Calu3 (cell line): ENCODE measurements at regions of chr6 and their contacts with region 1.

Region 1: GRCh38 chr6:56837311-56837894 is 117.5 kb upstream of the BEND6 start:
- DNase-seq: peak; percentile 43
- H3K4me3 Mint-ChIP-seq: peak overlapping the region; percentile 45
- H3K27ac Mint-ChIP-seq: peak overlapping the region; percentile 57
- H3K4me1 Mint-ChIP-seq: peaks cover 35% of the 10 kb centered on the region
- H3K27me3 Mint-ChIP-seq: no peaks in the 10 kb centered on the region
- CTCF ChIP-seq: no peak

Region 2: DNA sequence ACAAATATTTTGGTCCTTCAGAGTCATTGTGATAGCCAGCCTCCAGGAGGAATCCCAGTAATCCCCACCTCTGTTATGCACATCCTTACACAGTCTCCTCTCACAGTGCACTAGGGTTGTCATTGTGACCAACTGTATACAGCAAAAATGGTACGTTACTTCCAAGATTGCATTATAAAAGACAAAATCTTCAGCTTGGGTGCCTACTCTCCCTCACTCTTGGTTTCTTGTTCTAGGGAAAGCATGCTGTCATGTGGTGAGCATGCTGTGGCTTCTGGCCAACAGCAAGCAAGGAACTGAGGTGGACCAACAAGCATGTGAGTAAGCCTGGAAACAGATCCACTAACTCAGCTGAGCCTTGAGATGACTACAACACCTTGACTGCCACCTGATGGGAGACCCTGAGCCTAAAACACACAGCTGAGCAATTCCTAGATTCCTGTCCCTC is 64.6 kb before region 1 on chr6:
- CTCF ChIA-PET with region 1: no interaction called
- intact Hi-C with region 1: loop called (anchors 5 kb)
- DNase-seq: peak; percentile 45
- H3K4me3 Mint-ChIP-seq: no peak overlapping the region
- H3K27ac Mint-ChIP-seq: peak overlapping the region; percentile 30
- H3K4me1 Mint-ChIP-seq: peaks cover 28% of the 10 kb centered on the region
- H3K27me3 Mint-ChIP-seq: no peaks in the 10 kb centered on the region
- CTCF ChIP-seq: no peak